Natural killer cell (primary cell): ENCODE measurements at regions of chr11 and their contacts with region 1.

Region 1: GRCh38 chr11:60970369-60970774 is 1.1 kb upstream of the CD6 start:
- DNase-seq: peak; percentile 61 to 91
- ATAC-seq: peak; percentile 81 to 95 (median 82)
- H3K4me3 ChIP-seq: no peak overlapping the region
- H3K4me3 Mint-ChIP-seq: peak overlapping the region; percentile 79
- H3K27ac ChIP-seq: no peak overlapping the region
- H3K27ac Mint-ChIP-seq: no peak overlapping the region
- H3K4me1 ChIP-seq: peaks cover 42% of the 10 kb centered on the region
- H3K4me1 Mint-ChIP-seq: peaks cover 30 to 43% of the 10 kb centered on the region in 2 donors
- H3K27me3 ChIP-seq: no peaks in the 10 kb centered on the region
- H3K27me3 Mint-ChIP-seq: peaks cover 0 to 11% of the 10 kb centered on the region in 2 donors
- CTCF ChIP-seq: peak; percentile 86

Region 2: GRCh38 chr11:61129639-61130523 is 159.5 kb after region 1 on chr11:
- intact Hi-C with region 1: loop called (anchors 1 kb)
- DNase-seq: peak; percentile 81 to 95
- ATAC-seq: peak; percentile 95 to 100 (median 99)
- H3K4me3 ChIP-seq: no peak overlapping the region
- H3K4me3 Mint-ChIP-seq: no peak overlapping the region
- H3K27ac ChIP-seq: no peak overlapping the region
- H3K27ac Mint-ChIP-seq: peak overlapping the region in 1 of 2 donors; percentile 37
- H3K4me1 ChIP-seq: peaks cover 12% of the 10 kb centered on the region
- H3K4me1 Mint-ChIP-seq: peaks cover 6% of the 10 kb centered on the region in 2 donors
- H3K27me3 ChIP-seq: no peaks in the 10 kb centered on the region
- H3K27me3 Mint-ChIP-seq: peaks cover 0 to 7% of the 10 kb centered on the region in 2 donors
- CTCF ChIP-seq: peak; percentile 100